Adrenal gland (tissue), 19 donors: ENCODE measurements at regions of chr12 and their contacts with region 1.

Region 1: DNA sequence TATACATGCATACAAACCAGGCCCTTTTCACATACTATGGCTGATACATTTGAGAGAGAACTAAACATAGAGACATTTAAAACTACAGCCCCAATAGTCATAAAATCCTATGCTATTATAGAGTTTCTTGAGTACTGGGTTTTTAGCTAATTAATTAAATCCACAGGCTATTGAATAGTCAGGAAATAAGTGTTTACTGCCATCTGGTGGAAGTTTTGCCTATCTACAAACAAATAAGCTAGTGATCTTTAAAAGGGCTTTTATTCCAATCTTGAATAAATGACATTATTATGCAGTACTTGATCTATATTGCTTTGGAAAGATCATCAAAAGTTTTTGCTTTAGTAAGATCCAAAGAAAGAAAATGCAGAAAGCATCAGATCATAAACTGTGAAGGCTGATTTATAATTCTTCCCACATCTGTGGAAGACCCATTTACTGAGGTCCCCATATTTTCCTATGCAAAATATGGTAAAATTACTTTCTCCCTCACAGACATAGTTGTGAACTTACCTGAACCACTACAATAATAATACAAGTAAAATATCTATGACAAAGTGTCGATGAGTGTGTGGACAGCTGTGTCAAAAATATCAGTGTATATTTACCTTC is 131.3 kb downstream of the ITPR2 start:
- DNase-seq: no peak
- H3K4me3 ChIP-seq: no peak overlapping the region
- H3K27ac ChIP-seq: no peak overlapping the region
- H3K4me1 ChIP-seq: peaks cover 0 to 16% of the 10 kb centered on the region in 2 donors
- H3K27me3 ChIP-seq: no peaks in the 10 kb centered on the region
- CTCF ChIP-seq: peak; percentile 46 to 76 (median 62)
- POLR2A ChIP-seq: no peak

Region 2: DNA sequence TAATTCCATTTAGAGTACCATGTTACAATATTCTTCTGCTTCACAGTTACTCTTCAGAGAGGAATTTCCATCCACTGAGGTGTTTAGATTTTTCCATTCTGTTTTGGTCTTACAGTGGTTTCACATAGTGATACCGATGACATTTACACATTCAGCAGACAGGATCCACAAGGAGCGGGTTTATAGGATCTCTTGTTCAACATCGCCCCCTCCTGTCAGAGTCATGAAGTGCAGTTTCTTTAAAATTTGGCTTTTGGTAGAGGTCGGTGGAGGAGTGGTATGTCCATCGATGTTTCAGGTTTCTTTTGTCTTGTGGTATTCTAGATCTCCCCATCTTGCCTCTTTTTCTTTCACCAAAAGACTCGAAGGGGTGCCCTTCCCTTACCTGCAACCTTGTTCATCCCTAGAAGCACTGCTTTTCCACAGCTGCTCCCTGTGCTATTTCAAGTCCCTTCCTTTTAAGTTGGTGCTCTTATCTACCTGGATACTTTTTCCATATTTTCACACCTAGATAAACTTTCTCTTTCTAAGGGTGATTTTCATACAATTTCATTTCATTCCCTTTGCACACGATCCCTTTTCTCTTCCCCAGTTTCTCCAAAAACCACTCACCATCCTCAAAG is 50.0 kb before region 1 on chr12:
- intact Hi-C with region 1: loop called in 1 of 2 experiments (anchors 10 kb)
- DNase-seq: peak; percentile 37 to 78 (median 64)
- H3K4me3 ChIP-seq: no peak overlapping the region
- H3K27ac ChIP-seq: no peak overlapping the region
- H3K4me1 ChIP-seq: no peaks in the 10 kb centered on the region
- H3K27me3 ChIP-seq: no peaks in the 10 kb centered on the region
- CTCF ChIP-seq: peak; percentile 67 to 82 (median 75)
- POLR2A ChIP-seq: no peak

Region 3: GRCh38 chr12:26748741-26749431 is 47.2 kb after region 1 on chr12:
- intact Hi-C with region 1: no loop called
- DNase-seq: no peak
- H3K4me3 ChIP-seq: no peak overlapping the region
- H3K27ac ChIP-seq: no peak overlapping the region
- H3K4me1 ChIP-seq: peaks cover 21 to 42% of the 10 kb centered on the region in 2 donors
- H3K27me3 ChIP-seq: no peaks in the 10 kb centered on the region
- CTCF ChIP-seq: no peak
- POLR2A ChIP-seq: no peak